ENCODE measurements at regions of chr11 and their contacts with region 1.

Region 1: DNA sequence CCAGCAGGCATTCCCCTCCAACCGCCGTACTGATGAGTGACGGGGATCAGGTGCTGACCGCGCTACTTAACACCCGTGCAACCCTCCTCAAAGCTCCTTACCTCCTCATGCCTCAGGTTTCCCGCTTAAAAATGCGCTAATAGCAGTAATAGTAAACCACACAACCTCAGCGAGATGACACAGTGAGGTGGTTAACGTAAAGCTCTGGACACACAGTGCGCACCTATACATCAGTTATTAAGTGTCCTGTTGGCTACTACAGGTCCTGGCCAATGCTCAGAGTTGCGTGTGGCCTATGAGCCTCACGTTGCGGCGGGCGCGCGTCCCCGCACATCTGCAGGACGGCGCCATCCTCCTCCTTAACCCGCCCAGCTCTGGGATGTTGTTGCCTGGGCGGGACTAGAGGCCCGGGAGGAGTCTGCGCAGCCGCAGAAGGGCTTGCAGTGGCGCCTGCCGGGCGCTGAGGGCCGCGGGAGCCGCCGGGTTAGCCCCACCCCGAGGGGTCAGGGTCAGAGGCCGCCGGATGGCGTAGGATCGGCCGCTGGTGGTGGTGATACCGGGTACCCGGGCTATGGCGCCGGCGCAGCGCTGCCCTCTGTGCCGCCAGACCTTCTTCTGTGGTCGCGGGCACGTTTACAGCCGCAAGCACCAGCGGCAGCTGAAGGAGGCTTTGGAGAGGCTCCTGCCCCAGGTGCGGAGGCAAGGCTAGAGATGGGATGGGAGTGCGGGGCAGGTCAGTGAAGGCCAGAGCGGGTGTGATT is at the start of gene CENATAC:
- DNase-seq: peak; percentile 88 to 97 (median 93)
- ATAC-seq: peak; percentile 95 to 98 (median 96)
- H3K4me3 ChIP-seq: peak within 1 kb of the TSS; percentile 85 to 89
- H3K4me3 Mint-ChIP-seq: peak within 1 kb of the TSS; percentile 92 to 98 (median 97)
- H3K27ac ChIP-seq: peak within 1 kb of the TSS; percentile 78
- H3K27ac Mint-ChIP-seq: peak within 1 kb of the TSS; percentile 90
- H3K4me1 ChIP-seq: peaks cover 14 to 34% of the 10 kb centered on the region in 2 experiments
- H3K4me1 Mint-ChIP-seq: peaks cover 38 to 41% (median 41%) of the 10 kb centered on the region in 3 donors
- H3K27me3 ChIP-seq: no peaks in the 10 kb centered on the region
- H3K27me3 Mint-ChIP-seq: no peaks in the 10 kb centered on the region
- total RNA-seq, gene CENATAC: 104 to 121 (median 118) TPM

Region 2: GRCh38 chr11:118430956-118431355 is 566.9 kb before region 1 on chr11:
- CTCF ChIA-PET with region 1: no interaction called
- POLR2A ChIA-PET with region 1: interaction called in 1 of 2 experiments, 11 read pairs
- DNase-seq: no peak
- ATAC-seq: no peak
- H3K4me3 ChIP-seq: no peak overlapping the region
- H3K4me3 Mint-ChIP-seq: no peak overlapping the region
- H3K27ac ChIP-seq: no peak overlapping the region
- H3K27ac Mint-ChIP-seq: no peak overlapping the region
- H3K4me1 ChIP-seq: peaks cover 6 to 15% of the 10 kb centered on the region in 2 experiments
- H3K4me1 Mint-ChIP-seq: peaks cover 8 to 11% (median 9%) of the 10 kb centered on the region in 3 donors
- H3K27me3 ChIP-seq: no peaks in the 10 kb centered on the region
- H3K27me3 Mint-ChIP-seq: no peaks in the 10 kb centered on the region

Region 3: GRCh38 chr11:118799372-118799771 is 198.4 kb before region 1 on chr11:
- CTCF ChIA-PET with region 1: no interaction called
- POLR2A ChIA-PET with region 1: interaction called in 1 of 2 experiments, 15 read pairs
- DNase-seq: no peak
- ATAC-seq: no peak
- H3K4me3 ChIP-seq: no peak overlapping the region
- H3K4me3 Mint-ChIP-seq: no peak overlapping the region
- H3K27ac ChIP-seq: no peak overlapping the region
- H3K27ac Mint-ChIP-seq: no peak overlapping the region
- H3K4me1 ChIP-seq: no peaks in the 10 kb centered on the region
- H3K4me1 Mint-ChIP-seq: peaks cover 0 to 6% (median 4%) of the 10 kb centered on the region in 3 donors
- H3K27me3 ChIP-seq: no peaks in the 10 kb centered on the region
- H3K27me3 Mint-ChIP-seq: no peaks in the 10 kb centered on the region

Region 4: GRCh38 chr11:119018074-119018938 is 20.5 kb after region 1 on chr11 and contains the starts of genes RPS25 and TRAPPC4:
- CTCF ChIA-PET with region 1: interaction called in 1 of 2 experiments, 9 read pairs
- POLR2A ChIA-PET with region 1: interaction called, 6 to 16 read pairs
- DNase-seq: peak; percentile 84 to 99 (median 97)
- ATAC-seq: peak; percentile 88 to 92 (median 90)
- H3K4me3 ChIP-seq: peak within 1 kb of the TSS; percentile 95 to 98
- H3K4me3 Mint-ChIP-seq: peak within 1 kb of the TSS; percentile 96 to 99 (median 99)
- H3K27ac ChIP-seq: peak within 1 kb of the TSS; percentile 96
- H3K27ac Mint-ChIP-seq: peak within 1 kb of the TSS; percentile 100
- H3K4me1 ChIP-seq: peaks cover 15 to 45% of the 10 kb centered on the region in 2 experiments
- H3K4me1 Mint-ChIP-seq: peaks cover 53 to 68% (median 64%) of the 10 kb centered on the region in 3 donors
- H3K27me3 ChIP-seq: no peaks in the 10 kb centered on the region
- H3K27me3 Mint-ChIP-seq: no peaks in the 10 kb centered on the region
- total RNA-seq, gene RPS25: 1,733 to 2,728 (median 2,161) TPM
- total RNA-seq, gene TRAPPC4: 65.0 to 78.5 (median 74.3) TPM

Region 5: GRCh38 chr11:119205574-119206510 is 208.0 kb after region 1 on chr11 and contains the start of gene CBL:
- CTCF ChIA-PET with region 1: interaction called in 1 of 2 experiments, 3 read pairs
- POLR2A ChIA-PET with region 1: interaction called in 1 of 2 experiments, 11 read pairs
- DNase-seq: peak; percentile 84 to 99 (median 96)
- ATAC-seq: peak; percentile 87 to 92 (median 90)
- H3K4me3 ChIP-seq: peak within 1 kb of the TSS; percentile 70 to 95
- H3K4me3 Mint-ChIP-seq: peak within 1 kb of the TSS; percentile 93 to 100 (median 95)
- H3K27ac ChIP-seq: peak within 1 kb of the TSS; percentile 51
- H3K27ac Mint-ChIP-seq: peak within 1 kb of the TSS; percentile 86 to 89
- H3K4me1 ChIP-seq: peaks cover 17 to 27% of the 10 kb centered on the region in 2 experiments
- H3K4me1 Mint-ChIP-seq: peaks cover 39 to 47% (median 44%) of the 10 kb centered on the region in 3 donors
- H3K27me3 ChIP-seq: no peaks in the 10 kb centered on the region
- H3K27me3 Mint-ChIP-seq: no peaks in the 10 kb centered on the region
- total RNA-seq, gene CBL: 40.9 to 42.2 (median 41.1) TPM